SK-N-SH (cell line): ENCODE measurements at regions of chr14 and their contacts with region 1.

Region 1: DNA sequence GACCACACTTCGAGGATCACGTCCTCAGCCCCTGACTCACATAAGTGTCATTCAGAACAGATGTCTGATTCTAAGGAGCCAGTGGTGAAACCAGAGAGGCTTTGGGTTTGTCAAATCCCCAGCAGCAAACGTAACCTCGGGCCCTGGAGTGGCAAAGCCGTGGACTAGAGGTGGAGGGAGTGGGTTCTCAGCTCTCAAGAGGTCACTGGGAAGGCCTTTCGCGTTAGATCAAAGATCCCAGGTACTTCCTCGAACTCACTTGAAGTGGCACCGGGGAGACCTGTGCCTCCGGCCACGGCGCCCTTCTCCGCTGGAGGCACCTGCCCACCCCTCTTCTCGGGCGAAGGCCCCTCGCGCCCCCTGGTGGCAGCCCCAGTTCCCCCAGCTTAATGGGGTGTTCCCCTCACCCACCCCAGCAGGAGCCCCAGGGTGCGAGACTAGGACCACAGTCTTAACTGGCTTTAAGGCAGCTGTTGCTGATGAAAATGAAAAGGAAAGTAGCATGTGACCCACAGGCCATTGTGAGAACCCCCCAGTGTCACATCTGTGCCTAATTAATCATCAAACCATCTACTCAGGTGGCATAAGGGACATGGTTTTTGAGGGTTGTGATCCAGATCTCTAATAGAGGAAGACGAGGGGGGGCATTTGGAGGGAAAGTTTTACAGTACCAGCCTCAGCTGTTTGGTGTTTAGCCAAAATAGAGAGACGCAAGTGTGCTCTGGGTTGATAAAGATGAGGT is 672 bp upstream of the ESR2 start:
- DNase-seq: peak; percentile 75
- H3K4me3 ChIP-seq: peak overlapping the region in 1 of 2 experiments; percentile 63; a peak in 1 of 4 replicates
- H3K27ac ChIP-seq: no peak overlapping the region
- H3K4me1 ChIP-seq: peaks cover 0 to 4% of the 10 kb centered on the region in 2 experiments; a peak in 2 of 4 replicates
- H3K27me3 ChIP-seq: no peaks in the 10 kb centered on the region; the same call in 1 of the 2 replicates
- CTCF ChIP-seq: peak; percentile 67
- EP300 ChIP-seq: no peak
- RAD21 ChIP-seq: peak; percentile 55

Region 2: GRCh38 chr14:63800651-63801375 is 494.0 kb before region 1 on chr14:
- CTCF ChIA-PET with region 1: interaction called, 21 read pairs
- POLR2A ChIA-PET with region 1: no interaction called
- DNase-seq: no peak
- H3K4me3 ChIP-seq: no peak overlapping the region
- H3K27ac ChIP-seq: no peak overlapping the region
- H3K4me1 ChIP-seq: no peaks in the 10 kb centered on the region
- H3K27me3 ChIP-seq: no peaks in the 10 kb centered on the region
- CTCF ChIP-seq: no peak
- EP300 ChIP-seq: no peak
- RAD21 ChIP-seq: no peak

Region 3: DNA sequence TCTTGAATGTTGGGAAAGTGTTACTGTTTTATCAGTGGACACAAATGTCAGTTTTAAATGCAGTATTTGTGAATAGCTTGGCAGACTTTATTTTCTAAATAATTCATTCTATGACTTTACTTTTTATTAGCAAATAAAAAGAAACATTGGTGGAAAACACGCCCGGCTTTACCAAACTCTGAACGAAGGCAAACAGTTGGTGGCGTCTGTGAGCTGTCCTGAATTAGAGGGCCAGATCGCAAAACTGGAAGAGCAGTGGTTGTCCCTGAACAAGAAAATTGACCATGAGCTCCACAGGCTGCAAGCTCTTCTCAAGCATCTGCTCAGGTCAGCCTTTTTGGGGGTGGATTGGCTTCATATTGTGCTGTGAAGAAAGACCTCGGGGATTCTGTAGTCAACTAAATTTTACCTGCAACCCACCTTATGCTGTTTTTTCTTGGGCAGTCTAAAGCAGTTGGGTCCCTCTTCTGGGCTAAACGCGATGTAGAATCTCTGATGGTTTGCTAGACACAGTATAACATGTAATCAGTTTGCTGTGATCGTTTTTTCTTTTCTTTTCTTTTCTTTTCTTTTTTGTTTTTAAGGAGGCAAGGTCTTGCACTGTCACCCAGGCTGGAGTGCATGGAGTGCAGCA is 157.1 kb before region 1 on chr14:
- CTCF ChIA-PET with region 1: interaction called, 12 read pairs
- POLR2A ChIA-PET with region 1: no interaction called
- DNase-seq: no peak
- H3K4me3 ChIP-seq: no peak overlapping the region
- H3K27ac ChIP-seq: no peak overlapping the region
- H3K4me1 ChIP-seq: no peaks in the 10 kb centered on the region
- H3K27me3 ChIP-seq: no peaks in the 10 kb centered on the region
- CTCF ChIP-seq: peak; percentile 36
- EP300 ChIP-seq: no peak
- RAD21 ChIP-seq: peak; percentile 56